ENCODE measurements at regions of chr7 and their contacts with region 1.

Region 1: GRCh38 chr7:129468087-129468486 is 33.9 kb downstream of the STRIP2 start:
- DNase-seq: no peak
- ATAC-seq: no peak
- H3K4me3 ChIP-seq: no peak overlapping the region
- H3K4me3 Mint-ChIP-seq: peak overlapping the region; percentile 17
- H3K27ac ChIP-seq: no peak overlapping the region
- H3K27ac Mint-ChIP-seq: peak overlapping the region in 1 of 2 donors; percentile 81
- H3K4me1 ChIP-seq: no peaks in the 10 kb centered on the region
- H3K4me1 Mint-ChIP-seq: peaks cover 0 to 5% of the 10 kb centered on the region in 2 donors
- H3K27me3 ChIP-seq: no peaks in the 10 kb centered on the region
- H3K27me3 Mint-ChIP-seq: no peaks in the 10 kb centered on the region
- CTCF ChIP-seq: no peak

Region 2: DNA sequence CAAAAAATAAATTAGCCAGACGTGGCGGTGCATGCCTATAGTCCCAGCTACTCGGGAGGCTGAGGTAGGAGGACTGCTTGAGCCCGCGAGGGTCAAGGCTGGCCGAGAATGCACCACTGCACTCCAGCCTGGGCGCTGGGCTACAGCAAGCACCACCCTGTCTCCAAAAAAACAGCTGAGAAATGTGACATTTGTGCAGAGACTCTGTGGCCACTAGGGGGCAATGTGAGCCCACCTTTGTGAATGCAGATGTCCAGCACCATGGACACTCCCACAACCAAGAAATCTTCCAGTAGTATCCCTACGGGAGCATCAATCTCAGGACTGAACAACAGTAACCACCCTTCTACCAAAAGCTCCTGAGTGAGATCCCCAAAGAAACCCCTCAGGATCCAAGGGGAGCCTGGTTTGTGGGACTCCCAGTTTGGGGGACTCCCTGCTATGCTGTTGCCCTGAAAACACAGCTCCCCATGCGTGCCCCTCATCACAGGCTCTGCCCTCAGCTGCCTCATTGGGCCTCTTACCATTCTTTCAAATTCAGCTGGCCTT is 249.5 kb before region 1 on chr7:
- intact Hi-C with region 1: loop called (anchors 1 kb)
- DNase-seq: peak; percentile 76 to 90
- ATAC-seq: peak; percentile 88 to 98 (median 98)
- H3K4me3 ChIP-seq: no peak overlapping the region
- H3K4me3 Mint-ChIP-seq: no peak overlapping the region
- H3K27ac ChIP-seq: no peak overlapping the region
- H3K27ac Mint-ChIP-seq: no peak overlapping the region
- H3K4me1 ChIP-seq: no peaks in the 10 kb centered on the region
- H3K4me1 Mint-ChIP-seq: no peaks in the 10 kb centered on the region
- H3K27me3 ChIP-seq: no peaks in the 10 kb centered on the region
- H3K27me3 Mint-ChIP-seq: peaks cover 6 to 8% of the 10 kb centered on the region in 2 donors
- CTCF ChIP-seq: peak; percentile 91

Region 3: GRCh38 chr7:129343099-129343700 is 124.9 kb before region 1 on chr7:
- intact Hi-C with region 1: loop called (anchors 1 kb)
- DNase-seq: peak in 1 of 2 donors; percentile 65
- ATAC-seq: peak in 2 of 3 donors; percentile 59 to 70
- H3K4me3 ChIP-seq: no peak overlapping the region
- H3K4me3 Mint-ChIP-seq: no peak overlapping the region
- H3K27ac ChIP-seq: no peak overlapping the region
- H3K27ac Mint-ChIP-seq: no peak overlapping the region
- H3K4me1 ChIP-seq: peaks cover 3% of the 10 kb centered on the region
- H3K4me1 Mint-ChIP-seq: peaks cover 17 to 18% of the 10 kb centered on the region in 2 donors
- H3K27me3 ChIP-seq: no peaks in the 10 kb centered on the region
- H3K27me3 Mint-ChIP-seq: no peaks in the 10 kb centered on the region
- CTCF ChIP-seq: peak; percentile 77

Region 4: GRCh38 chr7:129367700-129368388 is 100.2 kb before region 1 on chr7:
- intact Hi-C with region 1: loop called (anchors 1 kb)
- DNase-seq: peak; percentile 62 to 86
- ATAC-seq: peak; percentile 78 to 82 (median 78)
- H3K4me3 ChIP-seq: no peak overlapping the region
- H3K4me3 Mint-ChIP-seq: peak overlapping the region; percentile 73
- H3K27ac ChIP-seq: peak overlapping the region; percentile 28
- H3K27ac Mint-ChIP-seq: peak overlapping the region; percentile 14 to 81
- H3K4me1 ChIP-seq: peaks cover 14% of the 10 kb centered on the region
- H3K4me1 Mint-ChIP-seq: peaks cover 19 to 23% of the 10 kb centered on the region in 2 donors
- H3K27me3 ChIP-seq: no peaks in the 10 kb centered on the region
- H3K27me3 Mint-ChIP-seq: peaks cover 0 to 2% of the 10 kb centered on the region in 2 donors
- CTCF ChIP-seq: peak; percentile 93

Region 5: GRCh38 chr7:129401967-129402860 is 65.9 kb before region 1 on chr7:
- intact Hi-C with region 1: loop called (anchors 1 kb)
- DNase-seq: peak in 1 of 2 donors; percentile 32
- ATAC-seq: peak in 2 of 3 donors; percentile 64 to 68
- H3K4me3 ChIP-seq: no peak overlapping the region
- H3K4me3 Mint-ChIP-seq: no peak overlapping the region
- H3K27ac ChIP-seq: no peak overlapping the region
- H3K27ac Mint-ChIP-seq: no peak overlapping the region
- H3K4me1 ChIP-seq: no peaks in the 10 kb centered on the region
- H3K4me1 Mint-ChIP-seq: peaks cover 0 to 6% of the 10 kb centered on the region in 2 donors
- H3K27me3 ChIP-seq: no peaks in the 10 kb centered on the region
- H3K27me3 Mint-ChIP-seq: no peaks in the 10 kb centered on the region
- CTCF ChIP-seq: peak; percentile 19